ENCODE measurements at regions of chr9 and their contacts with region 1.

Region 1: DNA sequence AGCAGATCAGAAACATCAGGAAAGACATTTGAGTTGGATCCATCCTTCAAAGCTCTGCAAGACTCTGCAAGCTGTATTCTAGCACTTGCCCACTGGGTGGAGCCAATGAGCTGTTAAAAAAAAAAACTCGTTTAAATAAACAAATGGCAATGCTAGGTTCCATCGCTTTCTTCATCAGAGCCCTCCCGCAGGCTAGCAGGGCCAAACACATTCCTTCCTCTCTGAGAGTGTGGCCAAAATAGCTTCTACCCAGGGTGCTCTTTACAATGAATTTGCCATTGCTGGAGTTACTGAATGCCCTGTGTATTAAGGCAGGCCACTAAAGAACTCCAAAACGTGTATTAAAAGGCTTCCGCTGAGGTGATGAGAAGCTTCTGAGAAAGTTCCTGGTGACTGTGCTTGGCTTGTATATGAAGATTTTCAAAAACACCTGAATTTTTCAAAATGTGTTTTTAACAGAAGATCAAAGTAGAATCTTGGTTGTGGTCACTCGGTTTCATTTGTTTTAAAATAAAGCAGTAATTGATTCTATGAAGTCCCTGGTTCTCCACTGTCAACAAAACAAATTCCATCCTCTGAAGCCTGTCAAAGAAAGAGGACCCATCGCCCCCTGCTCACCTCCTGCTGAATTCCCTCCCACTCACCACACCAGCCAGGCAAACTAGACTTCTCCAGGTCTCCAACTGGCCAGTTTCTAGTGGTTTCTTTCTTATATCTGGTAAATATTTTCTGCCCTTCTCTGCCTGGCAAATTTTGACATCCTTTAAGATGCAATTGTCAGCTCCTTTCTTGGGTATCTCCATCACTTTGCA is 36.5 kb upstream of the EQTN start:
- DNase-seq: peak; percentile 75
- ATAC-seq: peak; percentile 78
- H3K4me3 ChIP-seq: no peak overlapping the region
- H3K27ac ChIP-seq: no peak overlapping the region
- H3K4me1 ChIP-seq: 0 out of 2 replicates have a peak, but pooled peaks cover 4% of the 10 kb centered on the region
- H3K27me3 ChIP-seq: no peaks in the 10 kb centered on the region
- CTCF ChIP-seq: peak; percentile 72

Region 2: GRCh38 chr9:27427273-27427645 is 93.8 kb after region 1 on chr9:
- CTCF ChIA-PET with region 1: no interaction called
- POLR2A ChIA-PET with region 1: interaction called, 4 read pairs
- intact Hi-C with region 1: loop called (anchors 5 kb)
- DNase-seq: peak; percentile 90
- ATAC-seq: peak; percentile 67
- H3K4me3 ChIP-seq: no peak overlapping the region
- H3K27ac ChIP-seq: peak overlapping the region; percentile 96
- H3K4me1 ChIP-seq: peaks cover 60% of the 10 kb centered on the region
- H3K27me3 ChIP-seq: no peaks in the 10 kb centered on the region
- CTCF ChIP-seq: no peak

Region 3: DNA sequence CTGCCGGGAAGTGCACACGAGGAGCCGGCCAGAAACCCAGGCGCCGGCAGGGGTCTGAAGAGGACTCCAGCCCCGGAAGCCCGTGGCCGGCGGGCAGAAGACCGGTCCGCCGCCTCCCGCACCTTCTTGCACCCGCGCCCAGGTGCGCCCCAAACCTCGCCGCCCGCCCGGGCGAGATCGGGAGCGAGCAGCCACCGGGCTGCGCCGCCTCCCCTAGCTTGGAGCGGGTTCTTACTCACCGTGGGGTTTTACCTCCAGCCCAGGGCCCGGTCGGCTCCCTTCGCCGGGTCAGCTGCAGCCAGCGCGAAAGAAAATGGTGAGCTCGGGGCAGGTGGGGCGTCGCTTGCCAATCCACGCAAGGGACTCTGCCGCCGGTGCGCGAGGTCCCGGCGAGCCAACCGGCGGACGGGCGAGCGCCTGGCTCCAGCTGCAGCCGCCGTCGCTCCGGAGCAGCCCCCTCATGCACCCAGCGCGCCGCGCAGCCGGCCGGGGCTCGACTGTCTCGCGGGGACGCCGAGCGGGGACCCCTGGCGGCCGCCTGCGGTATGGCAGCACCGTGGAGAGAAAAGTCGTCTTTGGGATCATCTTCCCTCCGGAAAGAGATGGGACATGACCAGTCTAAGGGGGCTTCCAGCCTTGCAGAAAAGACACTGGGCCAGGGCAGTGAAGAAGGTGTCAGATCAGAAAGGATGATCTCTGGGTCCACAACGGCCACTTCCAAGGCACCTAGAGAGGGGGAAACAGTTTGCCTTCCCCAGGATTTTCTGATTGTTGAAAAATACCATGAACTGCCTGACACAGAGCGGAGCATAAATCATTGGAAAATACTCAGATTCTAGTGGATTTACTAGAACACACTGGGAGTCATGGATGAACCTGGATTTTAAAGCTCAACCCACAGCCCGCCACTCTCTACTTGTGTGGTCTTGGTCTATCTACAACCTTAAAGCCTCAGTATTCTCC is 196.2 kb after region 1 on chr9 and contains the start of gene MOB3B:
- CTCF ChIA-PET with region 1: interaction called, 9 read pairs
- POLR2A ChIA-PET with region 1: no interaction called
- intact Hi-C with region 1: loop called (anchors 1 kb)
- DNase-seq: peak; percentile 71
- ATAC-seq: peak; percentile 93
- H3K4me3 ChIP-seq: peak within 1 kb of the TSS; percentile 82
- H3K27ac ChIP-seq: no peak within 1 kb of the TSS
- H3K4me1 ChIP-seq: peaks cover 6% of the 10 kb centered on the region; the same call in 1 of the 2 replicates
- H3K27me3 ChIP-seq: no peaks in the 10 kb centered on the region
- CTCF ChIP-seq: peak; percentile 76
- total RNA-seq, gene MOB3B: 2.6 TPM in 2 replicates

Region 4: GRCh38 chr9:27548055-27548741 is 214.8 kb after region 1 on chr9:
- CTCF ChIA-PET with region 1: no interaction called
- POLR2A ChIA-PET with region 1: no interaction called
- intact Hi-C with region 1: loop called (anchors 1 kb)
- DNase-seq: peak; percentile 43
- ATAC-seq: peak; percentile 43; the same call in 1 of the 2 replicates
- H3K4me3 ChIP-seq: no peak overlapping the region
- H3K27ac ChIP-seq: no peak overlapping the region
- H3K4me1 ChIP-seq: no peaks in the 10 kb centered on the region
- H3K27me3 ChIP-seq: no peaks in the 10 kb centered on the region
- CTCF ChIP-seq: peak; percentile 60

Measured in PC-3 (cell line).